WTC11 (cell line): ENCODE measurements at regions of chr14 and their contacts with region 1.

Region 1: GRCh38 chr14:91996948-91997371 is 42.9 kb downstream of the TRIP11 start:
- DNase-seq: no peak
- ATAC-seq: peak; percentile 56; the same call in 1 of the 2 replicates
- H3K4me3 Mint-ChIP-seq: no peak overlapping the region
- H3K27ac Mint-ChIP-seq: no peak overlapping the region
- H3K4me1 Mint-ChIP-seq: peaks cover 3% of the 10 kb centered on the region; the same call in 1 of the 2 replicates
- H3K27me3 Mint-ChIP-seq: no peaks in the 10 kb centered on the region
- CTCF ChIP-seq: no peak

Region 2: DNA sequence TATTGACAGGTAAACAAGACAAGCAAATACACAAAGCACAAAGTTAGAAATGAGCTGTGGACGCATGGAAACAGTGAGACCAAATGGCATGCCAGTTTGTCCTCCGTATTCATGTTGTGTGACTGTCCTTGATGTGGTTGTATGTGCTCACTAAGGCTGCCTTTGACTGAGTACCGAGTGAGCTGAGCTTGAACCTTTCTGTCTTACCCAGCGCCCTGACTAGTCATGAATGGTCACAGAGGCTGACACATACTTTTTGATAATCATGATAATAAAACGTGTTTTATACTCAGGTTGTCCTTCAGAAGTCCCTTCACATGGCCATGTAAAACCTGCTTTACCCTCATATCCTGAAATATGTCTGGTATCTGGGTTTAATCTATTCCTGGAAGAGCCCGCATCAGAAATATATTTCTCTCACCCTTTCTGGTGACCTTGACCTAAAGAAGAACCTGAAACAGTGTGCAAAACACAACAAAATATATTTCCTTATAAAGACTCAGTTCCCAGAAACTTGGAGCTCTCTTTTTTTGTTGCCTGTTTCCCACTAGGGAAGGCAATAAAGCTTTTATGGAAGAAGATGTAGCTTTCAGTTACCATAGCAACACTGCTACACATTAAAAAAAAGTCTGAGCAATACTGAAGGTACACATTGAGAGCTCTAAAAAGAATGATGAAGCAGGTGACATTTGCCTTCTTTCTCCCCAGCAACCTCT is 264.4 kb before region 1 on chr14:
- CTCF ChIA-PET with region 1: no interaction called
- POLR2A ChIA-PET with region 1: no interaction called
- DNase-seq: no peak
- ATAC-seq: no peak
- H3K4me3 Mint-ChIP-seq: no peak overlapping the region
- H3K27ac Mint-ChIP-seq: no peak overlapping the region
- H3K4me1 Mint-ChIP-seq: no peaks in the 10 kb centered on the region
- H3K27me3 Mint-ChIP-seq: no peaks in the 10 kb centered on the region
- CTCF ChIP-seq: no peak

Region 3: GRCh38 chr14:91964724-91965123 is 32.2 kb before region 1 on chr14:
- CTCF ChIA-PET with region 1: interaction called, 11 read pairs
- POLR2A ChIA-PET with region 1: no interaction called
- DNase-seq: no peak
- ATAC-seq: no peak; the same call in 1 of the 2 replicates
- H3K4me3 Mint-ChIP-seq: no peak overlapping the region
- H3K27ac Mint-ChIP-seq: no peak overlapping the region; the same call in 1 of the 2 replicates
- H3K4me1 Mint-ChIP-seq: peaks cover 6% of the 10 kb centered on the region; the same call in 1 of the 2 replicates
- H3K27me3 Mint-ChIP-seq: no peaks in the 10 kb centered on the region
- CTCF ChIP-seq: no peak

Region 4: DNA sequence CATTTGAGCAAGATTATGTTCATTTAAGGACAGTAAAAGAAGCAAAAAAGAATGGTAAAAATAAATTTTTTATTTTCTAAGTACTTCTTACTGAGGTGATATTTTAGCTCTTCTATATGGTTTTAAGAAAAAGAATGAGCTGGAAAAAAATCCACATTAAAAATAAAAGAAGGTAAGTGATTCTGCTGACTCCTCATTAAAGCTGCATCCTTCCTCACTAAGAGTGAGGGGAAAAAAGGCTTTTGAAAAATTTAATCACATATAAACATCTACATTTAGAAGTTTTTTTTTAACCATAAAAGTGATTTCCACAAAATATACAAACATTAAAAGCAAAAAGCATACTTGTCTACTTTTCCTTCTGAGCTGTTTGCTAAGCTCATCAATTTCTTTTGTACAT is 21.2 kb before region 1 on chr14:
- CTCF ChIA-PET with region 1: interaction called, 11 read pairs
- POLR2A ChIA-PET with region 1: no interaction called
- DNase-seq: no peak
- ATAC-seq: no peak
- H3K4me3 Mint-ChIP-seq: no peak overlapping the region
- H3K27ac Mint-ChIP-seq: no peak overlapping the region
- H3K4me1 Mint-ChIP-seq: no peaks in the 10 kb centered on the region
- H3K27me3 Mint-ChIP-seq: no peaks in the 10 kb centered on the region
- CTCF ChIP-seq: no peak

Region 5: DNA sequence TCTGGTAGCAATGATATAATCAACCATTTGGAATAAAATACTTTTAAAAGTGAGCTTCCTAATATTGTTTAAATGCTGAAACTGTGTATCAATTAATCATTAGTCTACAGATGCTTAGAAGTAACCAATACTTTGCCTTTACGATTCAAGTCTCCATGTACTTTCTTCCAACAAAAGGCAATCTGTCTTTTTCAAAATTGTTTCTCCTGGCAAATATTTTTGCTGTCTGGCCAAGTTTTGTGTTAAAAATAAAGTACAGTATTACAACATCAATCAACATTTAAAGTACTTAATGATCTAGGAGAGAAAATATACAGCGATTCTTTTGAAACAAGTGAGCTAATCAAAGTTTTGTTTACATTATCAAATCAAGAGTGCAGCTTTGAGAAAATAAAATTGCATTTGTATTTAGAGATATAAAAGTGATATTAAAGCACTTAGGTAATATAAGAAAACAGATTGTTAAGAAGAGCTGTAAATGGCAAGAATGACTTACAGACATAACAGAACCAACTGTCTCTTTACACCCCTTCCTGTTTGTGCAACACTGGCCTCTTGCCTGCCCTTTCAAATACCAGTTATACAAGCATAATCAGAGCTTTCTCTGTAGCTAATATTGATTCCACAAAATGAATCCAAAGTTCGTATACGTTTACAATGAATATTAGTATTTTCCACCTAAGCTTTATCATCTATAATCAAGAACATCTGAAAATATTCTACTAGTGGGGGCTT is 11.3 kb before region 1 on chr14:
- CTCF ChIA-PET with region 1: interaction called, 13 read pairs
- POLR2A ChIA-PET with region 1: no interaction called
- DNase-seq: no peak
- ATAC-seq: no peak
- H3K4me3 Mint-ChIP-seq: no peak overlapping the region
- H3K27ac Mint-ChIP-seq: no peak overlapping the region
- H3K4me1 Mint-ChIP-seq: no peaks in the 10 kb centered on the region
- H3K27me3 Mint-ChIP-seq: no peaks in the 10 kb centered on the region
- CTCF ChIP-seq: no peak

Region 6: DNA sequence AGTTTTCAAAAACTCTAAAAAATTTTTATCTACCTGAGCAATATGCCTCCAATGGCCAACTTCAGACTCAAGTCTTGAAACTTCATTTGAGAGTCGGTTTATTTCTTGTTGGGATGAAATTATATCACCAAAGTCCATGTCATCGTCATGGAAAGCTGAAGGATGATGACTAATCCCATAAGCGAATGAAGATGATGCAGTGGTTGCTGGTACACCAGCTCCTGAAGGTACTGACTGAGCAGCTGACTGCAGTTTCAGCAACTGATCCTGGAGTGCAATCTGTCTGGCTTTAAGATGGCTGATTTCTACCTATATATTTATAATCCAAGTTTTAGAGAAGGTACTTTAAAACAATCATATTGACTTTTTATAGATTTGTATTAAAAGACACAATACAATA is 24.6 kb after region 1 on chr14:
- CTCF ChIA-PET with region 1: no interaction called
- POLR2A ChIA-PET with region 1: no interaction called
- DNase-seq: no peak
- ATAC-seq: no peak
- H3K4me3 Mint-ChIP-seq: no peak overlapping the region
- H3K27ac Mint-ChIP-seq: no peak overlapping the region
- H3K4me1 Mint-ChIP-seq: no peaks in the 10 kb centered on the region
- H3K27me3 Mint-ChIP-seq: no peaks in the 10 kb centered on the region
- CTCF ChIP-seq: no peak

Region 7: GRCh38 chr14:92074555-92074954 is 77.6 kb after region 1 on chr14:
- CTCF ChIA-PET with region 1: no interaction called
- POLR2A ChIA-PET with region 1: no interaction called
- DNase-seq: no peak
- ATAC-seq: no peak
- H3K4me3 Mint-ChIP-seq: no peak overlapping the region
- H3K27ac Mint-ChIP-seq: no peak overlapping the region
- H3K4me1 Mint-ChIP-seq: no peaks in the 10 kb centered on the region
- H3K27me3 Mint-ChIP-seq: no peaks in the 10 kb centered on the region
- CTCF ChIP-seq: no peak

Region 8: GRCh38 chr14:92106143-92106926 is 109.4 kb after region 1 on chr14 and contains the start of gene ATXN3:
- CTCF ChIA-PET with region 1: interaction called, 20 read pairs
- POLR2A ChIA-PET with region 1: no interaction called
- DNase-seq: peak; percentile 94
- ATAC-seq: peak; percentile 90
- H3K4me3 Mint-ChIP-seq: peak within 1 kb of the TSS; percentile 100
- H3K27ac Mint-ChIP-seq: peak within 1 kb of the TSS; percentile 98
- H3K4me1 Mint-ChIP-seq: peaks cover 37% of the 10 kb centered on the region
- H3K27me3 Mint-ChIP-seq: no peaks in the 10 kb centered on the region
- CTCF ChIP-seq: 0 out of 2 replicates have a peak, but pooled peaks have one; percentile 22
- total RNA-seq, gene ATXN3: 33.1 to 37.1 TPM (median 33.1 TPM) in 3 replicates

Region 9: GRCh38 chr14:92280554-92281262 is 283.7 kb after region 1 on chr14:
- CTCF ChIA-PET with region 1: no interaction called
- POLR2A ChIA-PET with region 1: no interaction called
- DNase-seq: no peak
- ATAC-seq: no peak
- H3K4me3 Mint-ChIP-seq: no peak overlapping the region
- H3K27ac Mint-ChIP-seq: no peak overlapping the region; the same call in 1 of the 2 replicates
- H3K4me1 Mint-ChIP-seq: no peaks in the 10 kb centered on the region
- H3K27me3 Mint-ChIP-seq: no peaks in the 10 kb centered on the region; the same call in 1 of the 2 replicates
- CTCF ChIP-seq: no peak